HepG2 (cell line): ENCODE measurements at regions of chr5 and their contacts with region 1.

Region 1: GRCh38 chr5:172006321-172007174 is at the start of gene FBXW11:
- DNase-seq: peak; percentile 94
- ATAC-seq: peak; percentile 92
- H3K4me3 ChIP-seq: peak within 1 kb of the TSS; percentile 78 to 99 (median 93)
- H3K27ac ChIP-seq: peak within 1 kb of the TSS; percentile 98
- H3K4me1 ChIP-seq: peaks cover 42% of the 10 kb centered on the region
- H3K27me3 ChIP-seq: peaks cover 0 to 4% of the 10 kb centered on the region in 2 experiments; a peak in 1 of 5 replicates
- CTCF ChIP-seq: no peak; the same call in 1 of the 2 replicates
- EP300 ChIP-seq: no peak
- POLR2A ChIP-seq: peak; percentile 89 to 94
- RAD21 ChIP-seq: peak; percentile 42
- total RNA-seq, gene FBXW11: 53.6 and 78.0 TPM in 2 replicates

Region 2: DNA sequence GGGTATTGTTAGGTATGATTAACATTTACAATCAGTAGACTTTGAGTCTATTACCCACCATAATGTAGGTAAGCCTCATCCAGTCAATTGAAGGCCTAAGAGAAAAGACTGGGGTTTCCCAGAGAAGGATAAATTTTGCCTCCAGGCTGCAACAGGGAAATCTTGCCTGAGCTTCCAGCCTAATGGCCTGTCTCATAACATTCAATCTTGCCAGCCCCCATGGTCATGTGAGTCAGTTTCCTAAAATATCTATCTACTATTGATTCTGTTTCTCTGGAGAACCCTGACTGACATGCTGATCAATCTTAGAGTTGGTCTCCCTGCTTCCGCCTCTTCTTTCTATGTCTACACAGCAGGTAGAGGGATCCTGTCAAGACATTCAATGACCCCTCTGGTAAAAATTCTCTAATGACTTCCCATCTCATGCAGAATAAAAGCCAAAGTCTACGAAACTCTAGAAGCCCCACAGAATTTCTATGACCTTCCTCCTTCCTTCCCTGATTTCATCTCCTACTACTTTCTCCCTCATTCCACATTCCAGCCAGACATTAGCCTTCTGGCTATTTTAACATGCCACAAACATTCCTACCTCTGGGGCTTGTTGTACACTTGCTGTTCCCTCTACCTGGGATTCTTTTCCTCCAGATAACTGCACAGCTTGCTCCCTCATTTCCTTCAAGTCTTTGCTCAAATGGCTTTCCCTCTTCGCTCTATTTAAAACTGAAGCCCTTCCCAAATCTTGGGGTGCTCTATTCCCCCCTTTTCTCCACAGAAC is 60.4 kb before region 1 on chr5:
- CTCF ChIA-PET with region 1: no interaction called
- POLR2A ChIA-PET with region 1: no interaction called
- in situ Hi-C with region 1: no loop called
- intact Hi-C with region 1: no loop called
- DNase-seq: no peak
- ATAC-seq: no peak
- H3K4me3 ChIP-seq: no peak overlapping the region
- H3K27ac ChIP-seq: no peak overlapping the region
- H3K4me1 ChIP-seq: peaks cover 34% of the 10 kb centered on the region
- H3K27me3 ChIP-seq: no peaks in the 10 kb centered on the region
- CTCF ChIP-seq: no peak
- EP300 ChIP-seq: no peak
- POLR2A ChIP-seq: no peak
- RAD21 ChIP-seq: no peak

Region 3: GRCh38 chr5:171984748-171985419 is 21.7 kb before region 1 on chr5:
- CTCF ChIA-PET with region 1: no interaction called
- POLR2A ChIA-PET with region 1: interaction called, 11 read pairs
- in situ Hi-C with region 1: no loop called
- intact Hi-C with region 1: no loop called
- DNase-seq: no peak
- ATAC-seq: no peak
- H3K4me3 ChIP-seq: no peak overlapping the region
- H3K27ac ChIP-seq: no peak overlapping the region
- H3K4me1 ChIP-seq: no peaks in the 10 kb centered on the region
- H3K27me3 ChIP-seq: no peaks in the 10 kb centered on the region
- CTCF ChIP-seq: no peak
- EP300 ChIP-seq: no peak
- POLR2A ChIP-seq: no peak
- RAD21 ChIP-seq: no peak

Region 4: GRCh38 chr5:172035039-172035438 is 28.5 kb after region 1 on chr5:
- CTCF ChIA-PET with region 1: no interaction called
- POLR2A ChIA-PET with region 1: no interaction called
- in situ Hi-C with region 1: no loop called
- intact Hi-C with region 1: loop called (anchors 1 kb)
- DNase-seq: no peak
- ATAC-seq: no peak
- H3K4me3 ChIP-seq: no peak overlapping the region
- H3K27ac ChIP-seq: no peak overlapping the region
- H3K4me1 ChIP-seq: peaks cover 4% of the 10 kb centered on the region; the same call in 1 of the 2 replicates
- H3K27me3 ChIP-seq: no peaks in the 10 kb centered on the region; a peak in 1 of 5 replicates
- CTCF ChIP-seq: no peak
- EP300 ChIP-seq: no peak
- POLR2A ChIP-seq: no peak
- RAD21 ChIP-seq: no peak

Region 5: GRCh38 chr5:172078726-172079345 is 72.3 kb after region 1 on chr5:
- CTCF ChIA-PET with region 1: no interaction called
- POLR2A ChIA-PET with region 1: no interaction called
- in situ Hi-C with region 1: no loop called
- intact Hi-C with region 1: no loop called
- DNase-seq: no peak
- ATAC-seq: no peak
- H3K4me3 ChIP-seq: no peak overlapping the region
- H3K27ac ChIP-seq: no peak overlapping the region
- H3K4me1 ChIP-seq: no peaks in the 10 kb centered on the region
- H3K27me3 ChIP-seq: no peaks in the 10 kb centered on the region
- CTCF ChIP-seq: no peak
- EP300 ChIP-seq: no peak
- POLR2A ChIP-seq: no peak
- RAD21 ChIP-seq: no peak